Right ventricle myocardium superior (tissue), 1 donor: ENCODE measurements at regions of chr4 and their contacts with region 1.

Region 1: GRCh38 chr4:173529477-173530325 is at the start of gene HAND2:
- DNase-seq: peak; percentile 87
- ATAC-seq: peak; percentile 68
- total RNA-seq, gene HAND2: 142 TPM

Region 2: DNA sequence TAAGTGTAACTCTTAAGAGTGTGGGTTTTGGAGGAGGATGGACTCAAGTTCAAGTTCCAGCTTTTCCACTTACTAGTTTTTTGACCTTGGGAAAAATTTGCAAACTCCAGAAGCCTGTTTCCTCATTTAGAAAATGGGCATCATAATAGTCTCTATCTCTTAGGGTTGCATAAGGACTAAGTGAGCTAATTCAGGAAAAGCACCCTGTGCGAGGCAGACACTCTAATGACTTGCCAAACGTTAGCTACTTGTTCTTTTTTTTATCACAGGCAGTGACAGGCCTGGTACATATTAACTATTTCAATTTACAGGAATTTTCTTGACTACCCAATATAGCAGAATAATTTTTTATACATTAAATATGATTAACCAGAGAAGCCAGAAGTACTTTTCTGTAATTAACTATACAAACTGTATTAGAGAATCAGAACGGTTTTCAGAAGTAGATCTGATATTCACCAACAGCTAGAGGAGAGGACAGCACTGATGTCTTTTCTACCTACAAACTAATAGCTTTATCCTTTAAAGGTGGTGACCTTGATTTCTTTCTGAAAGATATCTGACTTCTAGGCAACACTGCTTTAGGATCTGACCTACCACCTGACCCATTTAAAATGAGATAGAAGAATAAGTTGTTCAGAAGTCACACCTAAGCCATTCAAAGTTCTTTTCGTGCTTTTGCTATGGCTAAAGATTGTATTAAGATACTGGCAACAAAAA is 139.9 kb after region 1 on chr4:
- intact Hi-C with region 1: loop called (anchors 10 kb)
- DNase-seq: no peak
- ATAC-seq: peak; percentile 98

Region 3: GRCh38 chr4:173752610-173753230 is 223.0 kb after region 1 on chr4:
- intact Hi-C with region 1: loop called (anchors 5 kb)
- DNase-seq: no peak
- ATAC-seq: no peak